Right ventricle myocardium inferior (tissue), 1 donor: ENCODE measurements at regions of chr4 and their contacts with region 1.

Region 1: DNA sequence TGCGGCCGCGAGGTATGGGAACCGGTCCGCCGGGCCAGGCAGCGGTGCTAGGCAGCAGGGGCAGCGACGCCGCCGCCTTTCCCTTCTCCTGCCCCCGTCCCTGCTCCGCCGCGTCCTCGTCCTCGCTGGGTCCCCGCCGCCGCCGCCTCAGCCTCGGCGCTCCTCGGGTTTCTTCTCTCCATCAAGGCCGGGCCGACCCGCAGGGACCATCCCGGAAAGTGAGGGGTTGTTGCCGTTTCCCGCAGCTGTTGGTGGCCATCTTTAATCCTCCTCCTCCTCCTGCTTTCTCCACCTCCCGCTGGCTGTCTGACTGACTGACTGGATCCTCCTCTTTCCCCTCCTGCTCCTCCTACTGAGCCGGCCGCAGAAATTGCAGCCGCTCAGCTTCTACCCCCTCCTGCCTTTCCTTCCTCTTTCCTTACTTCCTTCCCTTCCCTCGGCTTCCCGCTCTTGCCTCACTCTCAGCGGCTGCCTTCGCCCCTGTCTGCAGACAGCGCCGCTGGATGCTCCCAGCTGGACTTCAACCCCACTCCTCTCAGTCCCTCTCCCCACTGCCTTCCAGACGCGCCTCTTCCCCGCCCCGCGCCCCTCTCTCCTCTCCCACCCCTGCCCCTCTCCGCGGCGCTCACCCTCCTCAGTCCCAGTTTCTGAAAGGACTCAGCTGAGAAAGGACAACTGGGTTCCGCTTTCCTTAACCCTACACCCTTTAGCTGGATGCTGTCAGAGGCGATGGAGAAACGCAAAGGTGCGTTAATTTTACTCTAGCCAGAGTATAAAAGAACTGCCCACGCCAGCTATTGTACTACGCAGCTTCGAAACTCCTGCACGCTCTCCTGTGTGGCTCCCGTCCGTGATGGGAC is at the start of gene WDFY3:
- DNase-seq: peak; percentile 92
- ATAC-seq: peak; percentile 96
- total RNA-seq, gene WDFY3: 41.0 TPM

Region 2: DNA sequence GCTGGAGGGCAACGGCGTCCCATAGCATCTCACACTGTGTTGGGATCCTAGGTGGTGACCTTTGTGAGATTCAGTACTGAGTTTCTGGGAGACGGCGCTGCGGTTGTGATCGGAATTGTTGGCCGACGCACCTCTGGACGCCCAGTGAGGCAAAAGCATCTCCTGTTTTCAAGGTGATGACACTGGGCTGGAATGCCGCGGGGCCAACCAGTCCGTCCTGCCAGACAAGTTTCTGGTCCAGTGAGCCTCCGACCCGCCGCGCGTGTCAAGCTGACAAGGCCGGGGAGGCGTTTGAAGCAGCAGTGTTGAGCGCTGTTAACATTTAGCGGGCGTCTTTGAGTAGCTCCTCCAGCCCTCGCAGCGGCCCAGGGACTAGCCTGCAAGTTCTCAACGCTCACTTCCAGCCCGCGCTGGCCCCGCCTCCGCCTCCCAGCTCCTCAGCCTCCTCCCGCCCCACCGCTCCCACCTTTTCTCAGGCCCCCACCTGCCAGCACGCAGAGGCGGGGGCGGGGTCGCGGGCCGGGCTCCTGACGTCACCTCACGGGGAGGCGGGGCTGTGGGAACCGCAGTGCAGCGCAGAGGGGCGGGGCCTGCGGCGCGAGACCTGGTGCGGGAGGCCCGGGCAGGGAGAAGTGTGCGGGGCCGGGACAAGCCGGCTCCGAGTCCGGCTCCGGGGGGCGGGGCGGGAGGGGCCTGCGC is 384.2 kb before region 1 on chr4:
- intact Hi-C with region 1: loop called (anchors 5 kb)
- DNase-seq: peak; percentile 90
- ATAC-seq: peak; percentile 95

Region 3: GRCh38 chr4:84750253-84750959 is 216.2 kb before region 1 on chr4:
- intact Hi-C with region 1: loop called (anchors 1 kb)
- DNase-seq: no peak
- ATAC-seq: peak; percentile 57

Region 4: GRCh38 chr4:84849051-84849640 is 117.5 kb before region 1 on chr4:
- intact Hi-C with region 1: loop called (anchors 5 kb)
- DNase-seq: no peak
- ATAC-seq: no peak

Region 5: GRCh38 chr4:84907145-84907544 is 59.5 kb before region 1 on chr4:
- intact Hi-C with region 1: no loop called
- DNase-seq: no peak
- ATAC-seq: peak; percentile 26

Region 6: DNA sequence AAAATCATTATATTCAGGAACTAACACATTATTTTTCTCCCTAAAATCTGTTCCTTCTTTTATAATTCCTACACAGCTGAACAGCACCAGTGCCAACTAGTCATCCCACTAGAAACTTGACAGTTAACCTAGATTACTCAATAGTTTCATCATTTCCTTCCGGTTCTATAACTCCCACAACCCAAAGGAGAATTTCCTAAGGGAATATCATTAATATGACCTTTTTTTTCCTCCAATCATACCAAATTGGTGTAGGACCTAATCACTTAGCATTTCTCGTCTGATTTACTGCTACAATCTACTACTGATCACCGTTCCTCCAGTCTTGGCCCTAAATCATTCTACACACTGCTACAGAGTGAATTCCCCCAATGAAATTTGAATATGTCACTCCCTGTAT is 46.0 kb before region 1 on chr4:
- intact Hi-C with region 1: loop called (anchors 5 kb)
- DNase-seq: no peak
- ATAC-seq: peak; percentile 68